Mucosa of descending colon (tissue), 3 donors: ENCODE measurements at regions of chr16 and their contacts with region 1.

Region 1: GRCh38 chr16:70653809-70654771 is 7.7 kb downstream of the IL34 start:
- DNase-seq: peak; percentile 47 to 88 (median 84)
- ATAC-seq: peak; percentile 95
- H3K4me3 ChIP-seq: no peak overlapping the region
- H3K4me1 ChIP-seq: peaks cover 3% of the 10 kb centered on the region
- CTCF ChIP-seq: peak; percentile 73

Region 2: GRCh38 chr16:70576431-70577255 is 77.4 kb before region 1 on chr16:
- intact Hi-C with region 1: loop called in 1 of 2 experiments (anchors 10 kb)
- DNase-seq: peak in 1 of 3 donors; percentile 45
- ATAC-seq: peak; percentile 83
- H3K4me3 ChIP-seq: no peak overlapping the region
- H3K4me1 ChIP-seq: peaks cover 10% of the 10 kb centered on the region
- CTCF ChIP-seq: no peak

Region 3: GRCh38 chr16:70594576-70594975 is 59.5 kb before region 1 on chr16:
- intact Hi-C with region 1: no loop called
- DNase-seq: peak in 1 of 3 donors; percentile 22
- ATAC-seq: no peak
- H3K4me3 ChIP-seq: no peak overlapping the region
- H3K4me1 ChIP-seq: peaks cover 6% of the 10 kb centered on the region
- CTCF ChIP-seq: no peak

Region 4: DNA sequence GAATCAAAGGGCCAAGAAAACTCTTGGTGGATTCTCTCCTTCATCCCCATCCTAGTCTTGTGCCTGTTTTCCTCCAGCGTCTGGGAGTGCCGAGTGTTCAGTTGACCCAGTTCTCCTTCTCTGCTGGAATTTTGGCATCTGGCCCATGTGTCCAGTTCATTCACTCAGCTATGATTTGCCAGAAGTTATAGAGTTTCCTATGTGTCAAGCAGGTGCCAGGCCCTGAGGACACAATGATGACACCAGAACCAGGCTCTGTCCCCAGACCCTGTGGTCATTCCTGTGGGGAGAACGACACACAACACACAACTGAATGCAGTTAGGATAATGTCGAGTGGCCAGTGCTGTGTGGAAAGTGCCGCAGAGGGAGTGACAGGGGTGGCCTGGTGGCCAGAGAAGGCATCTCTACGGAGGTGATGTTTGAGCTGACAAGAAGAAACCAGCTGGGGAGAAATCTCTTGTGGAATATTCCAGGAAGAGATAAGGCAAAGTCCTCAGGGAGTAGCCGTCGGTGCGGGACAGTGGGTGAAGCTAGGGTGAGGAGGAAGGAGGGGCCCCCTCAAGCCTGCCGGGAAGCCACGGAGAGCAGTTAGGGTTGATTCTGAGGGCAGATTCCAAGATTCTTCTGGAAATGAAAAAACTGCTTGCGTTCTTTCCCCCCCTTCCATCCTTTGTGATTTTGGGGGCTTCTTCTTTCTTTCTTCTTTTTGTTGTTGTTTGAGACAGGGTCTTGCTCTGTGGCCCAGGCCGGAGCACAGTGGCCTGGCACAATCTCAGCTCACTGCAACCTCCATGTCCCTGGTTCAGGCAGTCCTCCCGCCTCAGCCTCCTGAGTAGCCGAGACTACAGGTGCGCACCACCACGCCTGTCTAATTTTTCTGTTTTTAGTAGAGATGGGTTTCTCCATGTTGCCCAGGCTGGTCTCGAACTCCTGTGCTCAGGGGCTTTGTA is 43.5 kb before region 1 on chr16:
- intact Hi-C with region 1: no loop called
- DNase-seq: peak in 1 of 3 donors; percentile 48
- ATAC-seq: peak; percentile 62
- H3K4me3 ChIP-seq: no peak overlapping the region
- H3K4me1 ChIP-seq: peaks cover 13% of the 10 kb centered on the region
- CTCF ChIP-seq: no peak

Region 5: GRCh38 chr16:70679666-70680494 is 25.8 kb after region 1 on chr16:
- intact Hi-C with region 1: no loop called
- DNase-seq: peak in 2 of 3 donors; percentile 38 to 45
- ATAC-seq: peak; percentile 66
- H3K4me3 ChIP-seq: no peak overlapping the region
- H3K4me1 ChIP-seq: peaks cover 11% of the 10 kb centered on the region
- CTCF ChIP-seq: peak; percentile 48

Region 6: GRCh38 chr16:71328151-71328550 is 674.1 kb after region 1 on chr16:
- intact Hi-C with region 1: no loop called
- DNase-seq: no peak
- ATAC-seq: no peak
- H3K4me3 ChIP-seq: no peak overlapping the region
- H3K4me1 ChIP-seq: no peaks in the 10 kb centered on the region
- CTCF ChIP-seq: no peak